ENCODE measurements at regions of chr5 and their contacts with region 1.

Region 1: DNA sequence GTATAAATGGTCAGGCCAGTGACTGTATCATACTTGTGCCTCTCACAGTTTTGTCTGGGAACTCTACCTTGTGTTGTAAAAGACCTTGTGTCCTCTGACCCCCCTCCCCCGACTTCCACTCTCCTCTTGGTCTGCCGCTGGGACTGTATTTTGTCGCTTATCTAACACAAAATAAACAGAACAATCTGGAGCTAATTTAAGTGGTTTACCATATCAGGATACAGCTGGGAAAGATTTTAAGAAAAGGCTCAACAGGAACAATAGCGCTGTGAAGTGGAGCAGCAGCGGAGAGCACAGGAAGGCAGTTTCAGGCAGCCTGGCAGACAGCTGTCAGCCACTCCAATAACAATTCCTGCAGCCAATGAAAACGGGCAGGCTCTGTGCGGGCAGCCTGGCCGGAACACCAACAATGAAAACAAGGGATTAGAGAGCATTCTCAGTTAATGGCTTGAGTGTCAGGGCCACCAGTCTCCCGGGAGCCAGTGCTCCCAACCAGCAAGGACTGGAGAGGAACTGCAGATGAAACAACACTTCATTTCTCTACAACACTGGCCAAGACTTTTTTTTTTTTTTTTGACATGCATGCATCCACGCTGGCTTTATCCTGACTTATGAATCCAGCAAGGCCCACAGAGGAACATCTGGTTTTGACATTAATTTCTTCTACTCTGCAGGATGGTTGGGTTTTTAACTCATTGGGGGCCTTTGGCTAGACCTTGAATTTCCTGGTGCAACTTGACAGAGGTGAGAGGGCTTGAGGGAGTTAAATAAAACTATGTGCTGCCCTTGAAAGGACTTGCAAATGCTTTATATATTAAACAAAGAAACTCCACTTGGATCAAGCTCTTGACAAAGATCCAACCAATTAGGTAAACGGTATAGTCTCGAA is 76.7 kb downstream of the ARSB start:
- DNase-seq: peak; percentile 73
- ATAC-seq: peak; percentile 88

Region 2: DNA sequence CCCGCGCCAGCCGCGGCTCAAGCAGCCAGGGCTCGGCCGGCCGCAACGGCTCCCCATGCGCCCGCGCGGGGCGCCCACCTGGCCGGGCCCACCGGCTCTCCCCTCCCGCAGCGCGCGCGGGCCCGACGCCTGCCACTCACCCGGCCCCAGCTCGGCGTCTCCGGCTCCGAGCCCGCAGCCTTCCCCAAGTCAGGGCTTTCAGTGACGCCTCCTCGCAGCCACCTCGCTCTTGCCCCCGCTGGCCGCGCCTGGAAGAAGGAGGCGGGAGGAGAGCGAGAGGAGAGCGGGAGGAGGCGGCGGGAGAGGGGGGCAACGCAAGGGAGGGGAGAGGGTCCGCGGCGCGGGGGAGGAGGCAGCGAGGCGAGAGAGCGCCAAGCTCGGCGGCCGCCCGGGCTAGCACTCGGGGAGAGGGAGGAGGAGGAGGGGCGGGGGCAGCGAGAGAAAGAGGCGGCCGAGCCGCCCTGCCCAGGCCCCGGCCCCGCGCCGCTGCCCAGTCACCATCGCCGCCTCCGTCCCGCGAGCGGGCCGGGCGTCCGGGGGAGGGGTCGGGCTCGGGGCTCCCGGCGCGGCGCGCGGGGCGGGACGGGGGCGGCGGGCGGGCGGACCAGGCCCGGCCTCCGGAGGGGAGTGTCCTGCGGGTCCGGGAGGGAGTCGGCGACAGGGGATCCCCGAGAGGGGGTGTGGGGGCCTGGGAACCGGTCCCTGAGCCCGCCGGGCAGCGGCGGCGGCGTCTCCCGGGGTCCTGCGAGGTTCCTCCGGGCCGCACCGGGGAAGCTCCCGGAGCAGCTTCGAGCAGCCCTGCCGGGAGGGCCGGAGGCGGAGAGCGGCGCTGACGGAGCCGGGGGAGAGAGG is 259.8 kb before region 1 on chr5 and contains the start of gene LHFPL2:
- intact Hi-C with region 1: loop called (anchors 5 kb)
- DNase-seq: peak; percentile 91
- ATAC-seq: peak; percentile 91
- total RNA-seq, gene LHFPL2: 6.0 TPM

Region 3: GRCh38 chr5:78984439-78985115 is 76.2 kb after region 1 on chr5:
- intact Hi-C with region 1: loop called (anchors 2 kb)
- DNase-seq: peak; percentile 92
- ATAC-seq: peak; percentile 88

Measured in Right ventricle myocardium inferior (tissue), 1 donor.